AG04450 (cell line): ENCODE measurements at regions of chr9 and their contacts with region 1.

Region 1: GRCh38 chr9:22238809-22239684 is 207.6 kb upstream of the DMRTA1 start:
- DNase-seq: no peak
- H3K4me3 ChIP-seq: no peak overlapping the region
- H3K27ac ChIP-seq: no peak overlapping the region
- H3K27me3 ChIP-seq: no peaks in the 10 kb centered on the region
- CTCF ChIP-seq: peak; percentile 66

Region 2: DNA sequence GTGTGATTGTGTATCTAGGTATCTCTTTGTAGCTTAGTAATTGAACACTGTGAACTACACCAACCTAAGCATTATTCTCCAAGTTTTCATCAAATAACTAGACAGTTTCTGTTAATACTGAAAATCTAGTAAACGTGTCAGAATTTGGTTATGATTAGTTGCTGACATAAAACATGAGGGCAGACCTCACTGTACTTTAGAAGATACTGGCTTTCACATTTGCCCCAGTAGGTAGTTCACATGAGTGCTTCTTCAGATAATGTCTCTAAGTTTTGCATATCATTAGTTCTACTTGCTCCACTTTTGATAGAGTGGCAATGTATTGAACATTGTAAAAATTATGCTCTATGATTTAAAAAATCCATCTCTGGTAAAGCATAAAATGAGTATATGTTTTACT is 237.0 kb before region 1 on chr9:
- CTCF ChIA-PET with region 1: interaction called, 178 read pairs
- POLR2A ChIA-PET with region 1: no interaction called
- DNase-seq: no peak
- H3K4me3 ChIP-seq: no peak overlapping the region
- H3K27ac ChIP-seq: no peak overlapping the region
- H3K27me3 ChIP-seq: no peaks in the 10 kb centered on the region
- CTCF ChIP-seq: no peak

Region 3: GRCh38 chr9:22052376-22052945 is 186.6 kb before region 1 on chr9:
- CTCF ChIA-PET with region 1: interaction called, 12 read pairs
- POLR2A ChIA-PET with region 1: no interaction called
- DNase-seq: peak; percentile 91
- H3K4me3 ChIP-seq: no peak overlapping the region
- H3K27ac ChIP-seq: peak overlapping the region; percentile 39
- H3K27me3 ChIP-seq: no peaks in the 10 kb centered on the region
- CTCF ChIP-seq: no peak

Region 4: DNA sequence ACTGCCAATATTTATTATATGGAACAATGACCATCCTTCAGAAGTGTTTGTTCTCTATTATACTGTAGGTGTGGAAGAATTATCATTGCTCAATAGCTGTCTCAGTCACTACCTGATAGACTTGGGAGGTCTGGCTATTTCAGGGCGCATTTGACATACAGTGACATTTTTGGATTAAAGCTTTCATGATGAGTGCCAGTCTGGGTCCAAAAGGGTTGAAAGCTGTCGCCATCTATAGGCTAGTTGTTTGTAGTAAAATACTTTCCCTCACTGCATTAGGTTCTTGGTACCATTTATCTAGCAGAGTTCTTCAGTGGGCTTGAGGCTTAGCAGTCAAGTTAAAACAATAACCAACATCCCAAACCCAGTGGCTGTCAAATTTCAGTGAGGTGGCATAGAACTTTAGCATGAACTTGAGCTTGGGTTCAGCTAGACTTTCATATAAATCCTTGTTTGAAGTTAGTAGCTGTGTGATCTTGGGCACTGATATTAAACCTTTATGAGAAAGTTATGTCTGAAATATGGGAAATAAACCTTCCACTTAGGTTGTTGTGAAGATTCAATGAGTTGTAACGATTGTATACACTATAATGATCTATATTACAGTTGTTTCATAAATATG is 119.4 kb before region 1 on chr9:
- CTCF ChIA-PET with region 1: interaction called, 19 read pairs
- POLR2A ChIA-PET with region 1: no interaction called
- DNase-seq: no peak
- H3K4me3 ChIP-seq: no peak overlapping the region
- H3K27ac ChIP-seq: no peak overlapping the region
- H3K27me3 ChIP-seq: no peaks in the 10 kb centered on the region
- CTCF ChIP-seq: peak; percentile 59

Region 5: DNA sequence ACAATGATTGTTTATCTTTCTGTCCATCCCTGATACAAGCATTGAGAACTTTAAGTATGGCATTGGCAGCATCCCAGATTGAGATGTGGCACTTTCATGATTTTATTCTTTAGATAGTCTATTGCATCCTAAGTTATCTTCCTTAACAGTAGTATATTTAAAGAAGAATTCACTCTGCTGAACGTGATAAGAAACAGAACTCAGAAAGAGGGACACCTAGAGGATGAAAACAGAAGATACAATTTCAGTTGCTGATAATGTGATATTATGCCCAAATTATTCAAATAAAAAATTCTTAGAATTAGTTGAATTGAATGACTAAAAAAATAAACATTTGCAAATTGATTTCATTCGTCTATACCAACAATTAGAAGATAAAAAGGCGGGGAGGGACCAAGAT is 10.5 kb before region 1 on chr9:
- CTCF ChIA-PET with region 1: interaction called, 11 read pairs
- POLR2A ChIA-PET with region 1: no interaction called
- DNase-seq: no peak
- H3K4me3 ChIP-seq: no peak overlapping the region
- H3K27ac ChIP-seq: no peak overlapping the region
- H3K27me3 ChIP-seq: no peaks in the 10 kb centered on the region
- CTCF ChIP-seq: peak; percentile 48

Region 6: DNA sequence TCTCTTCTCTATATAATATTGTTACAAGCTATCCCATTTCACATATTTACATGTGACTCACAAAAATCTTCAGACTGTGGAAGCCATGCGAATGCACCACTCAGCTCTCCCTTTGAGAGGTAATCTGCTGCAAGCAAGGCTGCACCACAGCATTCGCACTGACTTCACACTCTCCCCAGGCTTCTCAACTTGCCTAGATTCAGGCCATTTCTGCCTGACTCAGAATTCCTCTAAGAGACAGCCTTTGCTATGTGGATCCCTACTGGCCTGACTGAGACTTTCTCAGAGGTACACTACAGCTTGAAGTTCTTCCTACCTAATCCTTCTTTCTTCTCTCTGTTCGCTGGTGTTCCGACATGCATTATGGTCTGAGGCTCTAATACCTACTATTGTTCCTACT is 186.5 kb after region 1 on chr9:
- CTCF ChIA-PET with region 1: no interaction called
- POLR2A ChIA-PET with region 1: no interaction called
- DNase-seq: no peak
- H3K4me3 ChIP-seq: no peak overlapping the region
- H3K27ac ChIP-seq: no peak overlapping the region
- H3K27me3 ChIP-seq: no peaks in the 10 kb centered on the region
- CTCF ChIP-seq: no peak